ENCODE measurements at regions of chr12 and their contacts with region 1.

Region 1: DNA sequence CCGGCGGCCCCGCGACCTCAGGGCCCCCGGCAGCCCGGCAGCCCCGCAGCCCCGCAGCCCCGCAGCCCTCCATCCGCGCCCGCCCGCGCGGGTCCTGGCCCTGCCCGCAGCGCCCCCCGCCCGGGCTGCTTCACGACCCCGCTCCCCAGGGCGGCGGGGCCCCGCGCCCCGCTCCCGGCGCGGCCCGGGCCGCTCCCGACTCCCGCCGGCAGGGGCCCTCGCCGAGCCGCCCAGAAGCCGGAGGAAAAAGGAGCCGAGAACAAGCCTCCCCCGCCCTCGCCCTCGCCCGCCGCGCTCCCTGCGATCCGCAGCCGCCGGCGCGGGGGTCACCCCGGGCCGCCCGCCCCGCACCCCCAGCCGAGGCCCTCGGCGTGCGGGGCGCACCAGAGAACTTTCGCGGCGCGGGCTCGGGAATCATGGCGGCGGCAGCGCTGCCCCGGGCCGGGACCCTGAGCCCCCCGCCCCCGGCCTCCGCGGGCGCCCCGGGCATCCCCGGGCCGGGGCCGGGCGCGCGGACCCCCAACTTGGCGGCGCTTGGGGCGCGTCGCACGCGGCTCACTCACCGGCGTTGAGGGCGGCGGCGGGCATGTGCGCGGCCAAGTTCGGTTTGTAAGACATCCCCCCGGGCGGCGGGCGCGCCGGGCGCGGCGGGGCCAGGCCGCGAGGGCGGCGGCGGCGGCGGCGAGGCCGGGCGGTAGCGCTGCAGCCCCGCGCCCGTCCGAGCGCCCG is 491 bp downstream of the CDK2AP1 start:
- DNase-seq: peak in 1 of 2 experiments; percentile 80
- H3K4me3 ChIP-seq: peak overlapping the region; percentile 75 to 94 (median 88)
- H3K27ac ChIP-seq: peak overlapping the region; percentile 85; the same call in 1 of the 2 replicates
- H3K4me1 ChIP-seq: peaks cover 2 to 17% (median 13%) of the 10 kb centered on the region in 4 experiments
- H3K27me3 ChIP-seq: no peaks in the 10 kb centered on the region
- CTCF ChIP-seq: peak in 2 of 3 experiments; percentile 49 to 56; a peak in 3 of 4 replicates
- EP300 ChIP-seq: no peak
- POLR2A ChIP-seq: 0 out of 3 replicates have a peak, but pooled peaks of 1 of the 2 experiments have one; percentile 50
- RAD21 ChIP-seq: peak; percentile 42 to 69

Region 2: DNA sequence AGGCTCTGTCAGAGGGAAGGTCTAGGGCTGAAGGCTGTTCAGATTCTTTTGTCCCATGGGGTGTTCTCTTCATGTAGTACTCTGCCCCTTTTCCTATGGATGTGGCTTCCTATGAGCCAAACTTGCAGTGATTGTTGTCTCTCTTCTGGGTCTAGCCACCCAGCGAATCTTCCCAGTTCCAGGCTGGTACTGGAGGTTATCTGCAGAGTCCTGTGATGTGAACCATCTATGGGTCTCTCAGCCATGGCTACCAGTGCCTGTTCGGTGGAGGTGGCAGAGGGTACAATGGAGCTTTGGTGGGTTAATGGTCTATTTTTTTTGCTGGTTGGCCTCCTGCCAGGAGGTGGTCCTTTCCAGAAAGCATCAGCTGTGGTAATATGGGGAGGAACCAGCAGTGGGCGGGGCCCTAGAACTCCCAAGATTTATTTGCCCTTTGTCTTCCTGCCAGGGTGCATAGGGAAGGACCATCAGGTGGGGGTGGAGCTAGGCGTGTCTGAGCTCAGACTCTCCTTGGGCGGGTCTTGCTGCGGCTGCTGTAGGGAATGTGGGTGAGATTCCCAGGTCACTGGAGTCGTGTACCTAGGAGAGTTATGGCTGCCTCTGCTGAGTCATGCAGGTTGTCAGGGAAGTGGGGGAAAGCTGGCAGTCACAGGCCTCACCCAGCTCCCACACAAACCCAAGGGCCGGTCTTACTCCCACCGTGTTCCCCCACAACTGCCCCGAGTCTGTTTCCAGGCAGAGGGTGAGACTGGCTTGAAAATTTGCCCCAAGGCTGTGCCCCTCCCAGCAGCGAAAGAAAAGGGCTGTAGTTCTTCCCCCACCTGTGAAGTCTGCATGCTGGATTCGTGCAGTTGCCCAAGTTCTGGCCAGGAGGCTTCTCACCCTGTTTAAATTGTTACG is 20.4 kb before region 1 on chr12:
- CTCF ChIA-PET with region 1: interaction called, 4 read pairs
- POLR2A ChIA-PET with region 1: interaction called, 32 read pairs
- DNase-seq: no peak
- H3K4me3 ChIP-seq: no peak overlapping the region
- H3K27ac ChIP-seq: no peak overlapping the region
- H3K4me1 ChIP-seq: peaks cover 0 to 5% (median 0%) of the 10 kb centered on the region in 4 experiments; a peak in 1 of 7 replicates
- H3K27me3 ChIP-seq: no peaks in the 10 kb centered on the region
- CTCF ChIP-seq: no peak
- EP300 ChIP-seq: no peak
- POLR2A ChIP-seq: no peak
- RAD21 ChIP-seq: no peak

Region 3: GRCh38 chr12:123365025-123365917 is 94.1 kb after region 1 on chr12:
- CTCF ChIA-PET with region 1: interaction called, 5 read pairs
- POLR2A ChIA-PET with region 1: interaction called, 30 read pairs
- DNase-seq: peak; percentile 95 to 98
- H3K4me3 ChIP-seq: peak overlapping the region; percentile 71 to 92 (median 88)
- H3K27ac ChIP-seq: peak overlapping the region; percentile 83
- H3K4me1 ChIP-seq: peaks cover 0 to 2% (median 0%) of the 10 kb centered on the region in 4 experiments; a peak in 1 of 7 replicates
- H3K27me3 ChIP-seq: no peaks in the 10 kb centered on the region
- CTCF ChIP-seq: peak; percentile 53 to 72 (median 54)
- EP300 ChIP-seq: no peak
- POLR2A ChIP-seq: peak in 1 of 2 experiments; percentile 72; a peak in 2 of 3 replicates
- RAD21 ChIP-seq: peak; percentile 44 to 53

Region 4: DNA sequence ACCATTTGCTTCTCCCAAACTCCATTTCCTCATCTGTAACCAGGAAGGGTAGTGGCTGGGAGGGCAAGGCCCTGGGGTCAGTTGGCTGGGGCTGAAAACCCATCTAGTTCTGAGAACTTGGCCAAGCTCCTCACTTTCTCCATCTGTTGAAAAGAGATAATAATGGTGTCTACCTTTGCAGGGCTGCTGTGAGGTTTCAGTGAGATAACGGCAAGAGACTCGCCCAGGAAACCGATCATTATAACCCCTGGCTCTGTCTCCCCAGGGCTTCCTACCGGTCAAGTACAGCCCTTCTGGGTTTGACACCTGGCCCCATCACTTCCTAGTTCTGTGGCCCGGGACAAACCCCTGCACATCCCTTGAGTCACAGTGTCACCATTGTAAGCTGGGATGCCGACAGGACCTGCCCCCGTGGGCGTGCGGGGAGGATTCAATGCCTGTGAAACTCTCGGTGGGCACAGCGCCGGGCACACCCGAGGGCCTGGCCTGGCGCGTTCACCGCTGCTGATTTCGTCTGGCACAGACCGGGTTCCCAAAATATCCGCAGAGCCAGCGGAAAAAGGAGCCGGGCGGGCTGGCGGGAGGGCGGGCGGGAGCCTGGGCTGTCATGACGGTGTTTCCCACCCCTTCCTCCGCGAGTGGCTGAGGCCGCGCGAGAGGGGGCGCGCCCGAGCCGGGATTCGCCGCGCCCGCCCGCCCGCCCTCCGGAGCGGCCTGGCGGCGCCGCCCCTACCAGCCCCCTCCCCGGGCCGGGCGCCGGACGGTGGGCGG is 117.2 kb after region 1 on chr12:
- CTCF ChIA-PET with region 1: no interaction called
- POLR2A ChIA-PET with region 1: interaction called, 10 read pairs
- DNase-seq: peak in 1 of 2 experiments; percentile 64
- H3K4me3 ChIP-seq: peak overlapping the region; percentile 27 to 67 (median 38)
- H3K27ac ChIP-seq: no peak overlapping the region
- H3K4me1 ChIP-seq: peaks cover 0 to 8% (median 4%) of the 10 kb centered on the region in 4 experiments; a peak in 4 of 7 replicates
- H3K27me3 ChIP-seq: peaks cover 1 to 33% (median 28%) of the 10 kb centered on the region in 4 experiments
- CTCF ChIP-seq: no peak
- EP300 ChIP-seq: no peak
- POLR2A ChIP-seq: no peak
- RAD21 ChIP-seq: no peak